ENCODE measurements at regions of chr3 and their contacts with region 1.

Region 1: GRCh38 chr3:72924055-72924454 is 36.2 kb downstream of the GXYLT2 start:
- DNase-seq: no peak
- H3K4me3 ChIP-seq: no peak overlapping the region
- H3K27ac ChIP-seq: no peak overlapping the region
- H3K4me1 ChIP-seq: no peaks in the 10 kb centered on the region
- H3K27me3 ChIP-seq: no peaks in the 10 kb centered on the region
- CTCF ChIP-seq: peak in 1 of 2 donors; percentile 4

Region 2: DNA sequence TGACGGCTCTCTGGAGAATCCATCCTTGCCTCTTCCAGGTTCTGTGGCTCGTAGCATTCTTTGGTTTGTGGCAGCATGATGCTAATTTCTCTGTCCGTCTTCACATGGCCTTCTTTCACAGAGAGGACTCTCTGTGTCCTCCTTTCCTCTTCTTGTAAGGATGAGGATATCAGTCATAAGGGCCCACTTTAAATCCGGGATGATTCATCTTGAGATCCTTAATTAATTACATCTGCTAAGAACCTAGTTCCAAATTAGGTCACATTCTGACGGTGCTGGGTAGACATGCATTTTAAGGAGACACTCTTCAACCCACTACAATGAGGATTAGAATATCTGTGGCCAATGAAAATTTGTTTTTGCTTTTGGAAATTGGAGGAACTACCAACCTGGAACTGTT is 51.9 kb before region 1 on chr3:
- CTCF ChIA-PET with region 1: no interaction called
- dilution Hi-C with region 1: loop called (anchors 5 kb)
- in situ Hi-C with region 1: no loop called
- intact Hi-C with region 1: no loop called
- DNase-seq: no peak
- H3K4me3 ChIP-seq: no peak overlapping the region
- H3K27ac ChIP-seq: no peak overlapping the region
- H3K4me1 ChIP-seq: no peaks in the 10 kb centered on the region
- H3K27me3 ChIP-seq: no peaks in the 10 kb centered on the region
- CTCF ChIP-seq: no peak

Measured in mammary epithelial cell (primary cell).